CD8-positive, alpha-beta memory T cell (primary cell): ENCODE measurements at regions of chr14 and their contacts with region 1.

Region 1: GRCh38 chr14:81464247-81465002 is 64.3 kb upstream of the STON2 start:
- DNase-seq: peak; percentile 7 to 75 (median 57)
- H3K4me3 ChIP-seq: peak overlapping the region; percentile 96
- H3K4me3 Mint-ChIP-seq: peak overlapping the region; percentile 85 to 91 (median 89)
- H3K27ac ChIP-seq: peak overlapping the region; percentile 61
- H3K27ac Mint-ChIP-seq: peak overlapping the region in 6 of 8 donors; percentile 83 to 94 (median 89)
- H3K4me1 ChIP-seq: no peaks in the 10 kb centered on the region
- H3K4me1 Mint-ChIP-seq: peaks cover 6 to 12% (median 9%) of the 10 kb centered on the region in 3 donors
- H3K27me3 ChIP-seq: no peaks in the 10 kb centered on the region
- H3K27me3 Mint-ChIP-seq: peaks cover 0 to 3% of the 10 kb centered on the region in 2 donors

Region 2: GRCh38 chr14:81474685-81475324 is 10.4 kb after region 1 on chr14:
- CTCF ChIA-PET with region 1: interaction called, 10 read pairs
- POLR2A ChIA-PET with region 1: no interaction called
- DNase-seq: no peak
- H3K4me3 ChIP-seq: peak overlapping the region; percentile 0
- H3K4me3 Mint-ChIP-seq: peak overlapping the region in 6 of 7 donors; percentile 78 to 90 (median 85)
- H3K27ac ChIP-seq: peak overlapping the region; percentile 5
- H3K27ac Mint-ChIP-seq: peak overlapping the region; percentile 83 to 99 (median 93)
- H3K4me1 ChIP-seq: peaks cover 13% of the 10 kb centered on the region
- H3K4me1 Mint-ChIP-seq: peaks cover 28 to 48% (median 35%) of the 10 kb centered on the region in 3 donors
- H3K27me3 ChIP-seq: no peaks in the 10 kb centered on the region
- H3K27me3 Mint-ChIP-seq: no peaks in the 10 kb centered on the region

Region 3: GRCh38 chr14:81485372-81485771 is 20.9 kb after region 1 on chr14:
- CTCF ChIA-PET with region 1: interaction called, 11 read pairs
- POLR2A ChIA-PET with region 1: no interaction called
- DNase-seq: peak in 2 of 5 donors; percentile 21 to 61
- H3K4me3 ChIP-seq: no peak overlapping the region
- H3K4me3 Mint-ChIP-seq: peak overlapping the region in 6 of 7 donors; percentile 25 to 85 (median 63)
- H3K27ac ChIP-seq: no peak overlapping the region
- H3K27ac Mint-ChIP-seq: peak overlapping the region; percentile 64 to 97 (median 88)
- H3K4me1 ChIP-seq: no peaks in the 10 kb centered on the region
- H3K4me1 Mint-ChIP-seq: peaks cover 16 to 29% (median 24%) of the 10 kb centered on the region in 3 donors
- H3K27me3 ChIP-seq: no peaks in the 10 kb centered on the region
- H3K27me3 Mint-ChIP-seq: no peaks in the 10 kb centered on the region

Region 4: GRCh38 chr14:81613341-81614045 is 149.1 kb after region 1 on chr14:
- CTCF ChIA-PET with region 1: no interaction called
- POLR2A ChIA-PET with region 1: no interaction called
- DNase-seq: no peak
- H3K4me3 ChIP-seq: no peak overlapping the region
- H3K4me3 Mint-ChIP-seq: no peak overlapping the region
- H3K27ac ChIP-seq: no peak overlapping the region
- H3K27ac Mint-ChIP-seq: no peak overlapping the region
- H3K4me1 ChIP-seq: no peaks in the 10 kb centered on the region
- H3K4me1 Mint-ChIP-seq: no peaks in the 10 kb centered on the region
- H3K27me3 ChIP-seq: no peaks in the 10 kb centered on the region
- H3K27me3 Mint-ChIP-seq: peaks cover 8 to 11% of the 10 kb centered on the region in 2 donors